ENCODE measurements at regions of chr12 and their contacts with region 1.

Region 1: GRCh38 chr12:119201789-119202543 is 23.2 kb downstream of the HSPB8 start:
- DNase-seq: no peak
- ATAC-seq: no peak
- H3K4me3 ChIP-seq: no peak overlapping the region
- H3K27ac ChIP-seq: no peak overlapping the region
- H3K4me1 ChIP-seq: peaks cover 5 to 54% (median 16%) of the 10 kb centered on the region in 9 donors
- H3K27me3 ChIP-seq: no peaks in the 10 kb centered on the region
- CTCF ChIP-seq: no peak

Region 2: DNA sequence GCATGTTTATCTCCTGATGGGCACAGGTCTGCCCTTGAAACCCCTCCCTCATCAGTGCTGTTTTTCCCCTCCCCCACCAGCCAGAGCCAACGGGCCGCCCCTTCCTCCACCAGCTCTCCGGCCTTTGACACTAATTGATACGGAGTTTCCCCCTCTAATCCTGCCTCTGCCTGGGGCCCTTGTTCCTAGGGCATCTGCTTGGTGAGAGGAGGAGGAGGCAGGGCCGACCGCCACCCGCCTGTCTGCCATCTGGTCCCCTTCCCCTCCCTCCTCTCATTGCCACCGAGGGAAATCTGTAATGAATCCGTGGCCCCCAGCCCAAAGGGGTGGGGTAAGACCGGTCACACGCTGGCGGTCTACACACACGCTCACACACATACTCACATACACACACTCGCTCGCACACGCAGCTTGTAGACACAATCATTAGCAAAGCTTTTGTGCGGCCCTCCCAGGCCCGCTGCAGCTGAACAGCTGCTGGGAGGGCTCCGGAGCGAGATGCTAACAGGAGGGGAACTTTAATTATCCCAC is 193.2 kb before region 1 on chr12:
- intact Hi-C with region 1: no loop called
- DNase-seq: no peak
- ATAC-seq: no peak
- H3K4me3 ChIP-seq: no peak overlapping the region
- H3K27ac ChIP-seq: no peak overlapping the region
- H3K4me1 ChIP-seq: no peaks in the 10 kb centered on the region
- H3K27me3 ChIP-seq: peaks cover 0 to 76% (median 52%) of the 10 kb centered on the region in 7 donors
- CTCF ChIP-seq: no peak

Region 3: DNA sequence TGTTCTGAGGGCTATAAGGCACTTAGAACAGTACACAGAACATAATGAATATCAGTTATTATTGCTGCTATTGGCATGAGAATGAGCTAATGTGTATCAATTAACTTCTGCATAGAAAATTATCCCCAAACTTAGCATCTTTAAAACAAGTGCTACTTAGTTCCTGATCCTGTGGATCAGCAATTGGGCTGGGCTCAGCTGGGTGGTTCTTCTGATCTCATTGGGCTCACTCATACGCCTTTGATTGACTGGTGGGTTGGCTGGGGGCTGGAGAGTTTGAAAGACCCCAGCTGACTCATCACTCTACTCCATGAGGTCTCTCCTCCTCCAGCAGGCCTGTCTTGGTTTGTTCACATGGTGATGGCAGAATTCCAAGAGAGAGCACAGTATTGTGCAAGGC is 50.5 kb before region 1 on chr12:
- intact Hi-C with region 1: loop called in 1 of 10 experiments (anchors 2 kb)
- DNase-seq: no peak
- ATAC-seq: no peak
- H3K4me3 ChIP-seq: no peak overlapping the region
- H3K27ac ChIP-seq: no peak overlapping the region
- H3K4me1 ChIP-seq: peaks cover 0 to 9% (median 1%) of the 10 kb centered on the region in 9 donors
- H3K27me3 ChIP-seq: peaks cover 0 to 4% (median 0%) of the 10 kb centered on the region in 7 donors
- CTCF ChIP-seq: no peak

Region 4: GRCh38 chr12:119461636-119462214 is 259.8 kb after region 1 on chr12:
- intact Hi-C with region 1: no loop called
- DNase-seq: no peak
- ATAC-seq: peak in 3 of 8 donors; percentile 29 to 59 (median 31)
- H3K4me3 ChIP-seq: no peak overlapping the region
- H3K27ac ChIP-seq: no peak overlapping the region
- H3K4me1 ChIP-seq: no peaks in the 10 kb centered on the region
- H3K27me3 ChIP-seq: no peaks in the 10 kb centered on the region
- CTCF ChIP-seq: no peak